ENCODE measurements at regions of chr9 and their contacts with region 1.

Region 1: GRCh38 chr9:38068866-38069629 is at the start of gene SHB:
- DNase-seq: peak; percentile 67 to 81 (median 77)
- H3K4me3 ChIP-seq: peak within 1 kb of the TSS; percentile 66
- H3K27ac ChIP-seq: peak within 1 kb of the TSS; percentile 64 to 74
- H3K4me1 ChIP-seq: peaks cover 4% of the 10 kb centered on the region
- H3K27me3 ChIP-seq: no peaks in the 10 kb centered on the region
- CTCF ChIP-seq: peak in 1 of 3 donors; percentile 49
- EP300 ChIP-seq: no peak
- POLR2A ChIP-seq: peak; percentile 32
- total RNA-seq, gene SHB: 5.7 to 23.8 (median 9.0) TPM

Region 2: DNA sequence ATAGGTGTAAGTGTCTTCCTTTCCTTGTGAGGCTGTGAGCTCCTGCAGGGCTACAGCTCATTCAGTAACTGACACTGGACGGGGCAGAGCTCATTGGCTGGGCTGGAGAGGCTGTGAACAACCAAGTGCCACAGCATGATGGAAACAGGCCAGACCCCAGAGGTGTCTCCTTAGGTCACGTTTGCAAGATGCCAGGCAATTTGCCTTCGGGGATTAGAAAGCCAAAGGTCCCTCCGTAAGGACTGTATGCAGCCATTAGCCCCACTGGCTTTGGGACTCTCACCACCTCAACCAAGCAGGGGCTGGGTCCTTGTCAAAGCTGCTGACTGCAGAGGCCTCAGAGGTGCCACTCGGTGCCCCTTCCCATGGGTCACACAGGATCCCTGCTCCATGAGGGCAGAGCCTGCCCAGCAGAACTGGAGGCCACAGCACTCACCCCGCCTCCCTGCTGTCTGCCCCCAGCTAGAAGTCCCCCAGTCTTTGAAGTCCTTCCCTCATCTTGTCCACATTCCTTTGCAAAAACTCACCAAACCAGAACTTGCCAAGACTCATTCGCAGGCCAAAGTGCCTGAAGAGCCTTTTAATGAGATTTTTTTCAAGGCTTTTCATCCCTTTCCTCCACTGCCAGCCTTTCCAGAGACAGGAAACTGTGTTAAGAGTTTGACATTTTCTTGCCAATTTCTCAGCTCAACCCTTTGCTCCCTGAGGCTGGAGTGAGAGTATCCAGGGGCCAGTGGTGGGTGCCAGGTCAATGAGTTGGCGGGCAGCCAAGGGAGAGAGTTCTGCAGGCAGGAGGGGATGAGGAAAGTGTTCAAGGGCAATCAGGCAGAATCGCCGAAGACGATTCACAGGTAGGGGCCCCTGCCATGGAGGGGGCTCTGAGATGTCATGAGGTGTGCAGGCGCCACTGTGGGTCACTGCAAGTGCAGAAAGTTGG is 125.5 kb before region 1 on chr9:
- intact Hi-C with region 1: loop called in 1 of 4 experiments (anchors 10 kb)
- DNase-seq: peak; percentile 47 to 77 (median 72)
- H3K4me3 ChIP-seq: no peak overlapping the region
- H3K27ac ChIP-seq: no peak overlapping the region
- H3K4me1 ChIP-seq: peaks cover 16% of the 10 kb centered on the region
- H3K27me3 ChIP-seq: no peaks in the 10 kb centered on the region
- CTCF ChIP-seq: no peak
- EP300 ChIP-seq: no peak
- POLR2A ChIP-seq: no peak

Measured in ovary (tissue), 10 donors.